Mammary epithelial cell (primary cell): ENCODE measurements at regions of chr9 and their contacts with region 1.

Region 1: GRCh38 chr9:19946441-19947109 is 157.7 kb upstream of the SLC24A2 start:
- DNase-seq: peak; percentile 32
- H3K4me3 ChIP-seq: no peak overlapping the region
- H3K27ac ChIP-seq: no peak overlapping the region
- H3K4me1 ChIP-seq: peaks cover 2% of the 10 kb centered on the region
- H3K27me3 ChIP-seq: no peaks in the 10 kb centered on the region
- CTCF ChIP-seq: peak; percentile 55 to 75

Region 2: DNA sequence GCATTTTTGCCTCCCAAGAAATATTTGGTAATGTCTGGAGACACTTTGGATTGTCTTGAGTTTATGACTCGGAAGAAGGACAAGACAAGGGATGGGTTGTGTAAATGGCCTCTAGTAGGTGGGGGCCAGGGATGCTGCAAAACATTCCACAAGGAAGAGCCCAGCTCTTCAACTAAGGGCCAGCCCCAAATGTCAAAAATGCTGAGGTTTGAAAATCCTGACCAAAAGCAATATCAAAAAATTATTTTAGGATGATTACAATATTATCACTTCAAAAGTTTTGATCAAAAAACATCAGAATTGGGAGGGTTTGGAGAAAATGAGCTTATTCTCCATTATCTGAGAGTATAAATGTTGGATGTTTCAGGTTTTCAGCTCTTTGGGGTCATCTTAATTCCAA is 91.1 kb after region 1 on chr9:
- CTCF ChIA-PET with region 1: no interaction called
- dilution Hi-C with region 1: no loop called
- in situ Hi-C with region 1: no loop called
- intact Hi-C with region 1: loop called (anchors 5 kb)
- DNase-seq: no peak
- H3K4me3 ChIP-seq: no peak overlapping the region
- H3K27ac ChIP-seq: no peak overlapping the region
- H3K4me1 ChIP-seq: no peaks in the 10 kb centered on the region
- H3K27me3 ChIP-seq: no peaks in the 10 kb centered on the region
- CTCF ChIP-seq: no peak

Region 3: GRCh38 chr9:20112205-20112783 is 165.7 kb after region 1 on chr9:
- CTCF ChIA-PET with region 1: no interaction called
- dilution Hi-C with region 1: no loop called
- in situ Hi-C with region 1: no loop called
- intact Hi-C with region 1: loop called (anchors 10 kb)
- DNase-seq: no peak
- H3K4me3 ChIP-seq: no peak overlapping the region
- H3K27ac ChIP-seq: no peak overlapping the region
- H3K4me1 ChIP-seq: no peaks in the 10 kb centered on the region
- H3K27me3 ChIP-seq: no peaks in the 10 kb centered on the region
- CTCF ChIP-seq: no peak

Region 4: GRCh38 chr9:20191228-20191840 is 244.8 kb after region 1 on chr9:
- CTCF ChIA-PET with region 1: no interaction called
- dilution Hi-C with region 1: no loop called
- in situ Hi-C with region 1: no loop called
- intact Hi-C with region 1: loop called (anchors 1 kb)
- DNase-seq: no peak
- H3K4me3 ChIP-seq: no peak overlapping the region
- H3K27ac ChIP-seq: no peak overlapping the region
- H3K4me1 ChIP-seq: no peaks in the 10 kb centered on the region
- H3K27me3 ChIP-seq: peaks cover 4% of the 10 kb centered on the region
- CTCF ChIP-seq: peak in 1 of 2 donors; percentile 36

Region 5: DNA sequence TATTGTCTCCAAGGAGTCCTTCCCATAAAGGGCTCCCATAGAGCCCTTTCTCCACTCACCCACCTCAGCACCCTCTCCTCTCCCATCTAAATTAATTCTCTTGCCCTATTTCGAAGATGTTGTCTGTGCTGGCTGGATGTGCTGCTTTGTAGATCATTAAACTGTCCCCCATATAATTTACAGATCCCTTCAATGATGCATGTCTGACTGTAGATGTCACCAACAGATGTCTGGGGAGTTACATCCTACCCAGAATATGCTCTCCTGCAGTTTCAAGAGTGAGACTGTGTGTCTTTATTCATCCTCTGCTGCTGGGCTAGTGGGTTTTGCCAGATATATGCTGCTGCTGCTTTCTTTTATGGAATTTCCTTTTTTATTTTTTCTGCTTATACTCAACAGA is 324.5 kb after region 1 on chr9:
- CTCF ChIA-PET with region 1: no interaction called
- dilution Hi-C with region 1: no loop called
- in situ Hi-C with region 1: no loop called
- intact Hi-C with region 1: loop called (anchors 2 kb)
- DNase-seq: no peak
- H3K4me3 ChIP-seq: no peak overlapping the region
- H3K27ac ChIP-seq: no peak overlapping the region
- H3K4me1 ChIP-seq: peaks cover 11% of the 10 kb centered on the region
- H3K27me3 ChIP-seq: no peaks in the 10 kb centered on the region
- CTCF ChIP-seq: no peak

Region 6: GRCh38 chr9:20941174-20941690 is 994.7 kb after region 1 on chr9:
- CTCF ChIA-PET with region 1: no interaction called
- dilution Hi-C with region 1: no loop called
- in situ Hi-C with region 1: loop called (anchors 25 kb)
- intact Hi-C with region 1: loop called (anchors 5 kb)
- DNase-seq: peak; percentile 66
- H3K4me3 ChIP-seq: no peak overlapping the region
- H3K27ac ChIP-seq: no peak overlapping the region
- H3K4me1 ChIP-seq: no peaks in the 10 kb centered on the region
- H3K27me3 ChIP-seq: no peaks in the 10 kb centered on the region
- CTCF ChIP-seq: peak; percentile 79 to 81